ENCODE measurements at regions of chr11 and their contacts with region 1.

Region 1: DNA sequence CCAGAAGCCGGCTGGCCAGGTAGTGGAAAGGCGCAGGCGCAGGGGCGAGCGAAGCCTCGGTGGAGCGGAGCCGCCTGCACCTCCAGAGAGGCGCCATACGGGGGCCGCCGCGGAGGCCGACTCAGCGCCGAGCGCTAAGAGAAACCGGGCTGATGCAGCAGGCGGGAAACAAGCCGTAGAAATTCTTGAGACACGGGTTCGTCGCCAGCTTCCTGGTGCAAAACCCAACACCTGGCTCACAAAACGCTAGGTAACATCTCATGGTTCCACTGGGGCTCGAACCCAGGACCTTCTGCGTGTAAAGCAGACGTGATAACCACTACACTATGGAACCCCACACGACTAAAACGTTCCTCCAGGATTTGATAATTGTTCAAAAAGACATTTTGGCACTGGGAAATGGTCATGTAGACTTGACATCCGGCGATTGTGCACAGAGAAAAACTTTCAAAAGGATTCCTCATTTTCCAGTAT is 39.1 kb downstream of the OR4D9 start:
- DNase-seq: peak; percentile 84
- H3K4me3 ChIP-seq: peak overlapping the region; percentile 40 to 68 (median 44)
- H3K27ac ChIP-seq: peak overlapping the region; percentile 86 to 91 (median 90)
- H3K4me1 ChIP-seq: peaks cover 0 to 14% (median 9%) of the 10 kb centered on the region in 4 donors
- H3K27me3 ChIP-seq: no peaks in the 10 kb centered on the region
- CTCF ChIP-seq: peak; percentile 37 to 81 (median 56)
- EP300 ChIP-seq: no peak
- POLR2A ChIP-seq: no peak

Region 2: DNA sequence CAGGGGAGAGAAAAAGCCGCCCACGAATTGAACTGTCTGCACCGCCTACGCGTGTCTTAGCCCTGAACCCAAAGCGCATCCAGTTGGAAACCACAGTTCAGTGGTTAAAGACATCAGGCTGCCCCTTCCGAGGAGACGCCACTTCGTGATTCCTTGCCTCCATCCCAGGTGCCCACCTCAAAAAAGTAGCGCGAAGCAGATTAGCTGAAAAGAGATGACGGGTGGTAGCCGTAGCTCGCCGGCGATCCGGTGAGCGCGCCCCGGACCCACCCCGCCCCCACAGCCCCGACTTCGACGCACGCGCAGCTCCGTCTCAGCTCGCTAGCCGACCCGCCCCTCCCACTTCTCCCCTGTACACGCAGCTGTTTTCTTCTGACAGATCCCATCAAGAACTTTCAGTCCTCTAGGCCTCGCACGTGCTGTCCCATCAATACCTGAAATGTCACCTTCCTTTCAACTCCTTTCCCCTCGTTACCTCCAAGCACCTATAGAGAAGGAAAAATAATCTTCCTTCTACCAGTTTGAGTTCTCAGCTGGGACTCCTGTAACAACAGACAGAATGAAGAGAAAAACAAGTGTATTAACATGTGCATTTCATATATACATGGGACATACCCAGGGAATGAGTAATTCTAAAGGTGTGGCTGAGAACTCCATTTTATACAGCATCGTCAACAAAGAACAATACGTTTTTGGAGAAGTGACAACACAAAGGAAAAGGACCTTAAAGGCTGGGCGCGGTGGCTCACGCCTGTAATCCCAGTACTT is 10.5 kb after region 1 on chr11:
- in situ Hi-C with region 1: no loop called
- intact Hi-C with region 1: loop called (anchors 1 kb)
- DNase-seq: peak; percentile 91
- H3K4me3 ChIP-seq: peak overlapping the region; percentile 63 to 92 (median 83)
- H3K27ac ChIP-seq: peak overlapping the region; percentile 88 to 95 (median 91)
- H3K4me1 ChIP-seq: peaks cover 3 to 24% (median 13%) of the 10 kb centered on the region in 4 donors
- H3K27me3 ChIP-seq: no peaks in the 10 kb centered on the region
- CTCF ChIP-seq: no peak
- EP300 ChIP-seq: no peak
- POLR2A ChIP-seq: peak; percentile 48

Region 3: GRCh38 chr11:59615637-59616395 is 65.4 kb after region 1 on chr11 and contains the start of gene OSBP:
- in situ Hi-C with region 1: no loop called
- intact Hi-C with region 1: loop called (anchors 2 kb)
- DNase-seq: peak; percentile 99
- H3K4me3 ChIP-seq: peak within 1 kb of the TSS; percentile 78 to 93 (median 87)
- H3K27ac ChIP-seq: peak within 1 kb of the TSS; percentile 95 to 99 (median 98)
- H3K4me1 ChIP-seq: peaks cover 33 to 44% (median 39%) of the 10 kb centered on the region in 4 donors
- H3K27me3 ChIP-seq: no peaks in the 10 kb centered on the region
- CTCF ChIP-seq: peak in 2 of 5 experiments; percentile 14 to 51
- EP300 ChIP-seq: no peak
- POLR2A ChIP-seq: peak; percentile 85
- total RNA-seq, gene OSBP: 27.7 to 59.1 (median 47.2) TPM

Region 4: DNA sequence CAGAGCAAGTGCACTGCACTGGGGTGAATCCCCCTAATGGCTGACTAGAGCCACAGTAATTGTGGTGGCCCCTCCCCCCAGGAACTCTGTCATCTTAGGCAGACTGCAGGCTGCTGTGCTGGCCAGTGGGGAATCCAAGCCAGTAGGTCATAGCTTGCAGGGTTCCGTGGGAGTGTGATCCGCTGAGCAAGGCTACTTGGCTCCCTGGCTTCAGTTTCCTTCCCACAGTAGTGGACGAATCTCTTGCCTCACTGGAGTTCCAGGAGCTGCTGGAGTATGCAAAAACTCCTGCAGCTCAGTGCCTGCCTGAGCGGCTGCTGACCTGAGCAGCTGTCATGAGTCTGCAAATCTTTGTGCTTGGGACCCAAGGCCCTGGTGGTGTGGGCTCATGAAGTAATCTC is 341.4 kb after region 1 on chr11:
- in situ Hi-C with region 1: no loop called
- intact Hi-C with region 1: no loop called
- DNase-seq: no peak
- H3K4me3 ChIP-seq: no peak overlapping the region
- H3K27ac ChIP-seq: no peak overlapping the region
- H3K4me1 ChIP-seq: no peaks in the 10 kb centered on the region
- H3K27me3 ChIP-seq: no peaks in the 10 kb centered on the region
- CTCF ChIP-seq: no peak
- EP300 ChIP-seq: no peak
- POLR2A ChIP-seq: no peak

Measured in transverse colon (tissue), 4 donors.